Activated T-helper 2 cell treated with anti-CD3 and anti-CD28 coated beads, Interferon-gamma antibody, Interleukin-2, Interleukin-4, amounts not matched to agents 10 μg/mL and 5 μg/mL and 100 μg/mL, durations not matched to agents 14 hours and 24 hours and 36 hours (primary cell): ENCODE measurements at regions of chr1 and their contacts with region 1.

Region 1: GRCh38 chr1:43293896-43294760 is 6.7 kb upstream of the TIE1 start:
- DNase-seq: no peak
- H3K4me3 Mint-ChIP-seq: no peak overlapping the region
- H3K27ac Mint-ChIP-seq: peak overlapping the region; percentile 53
- H3K4me1 Mint-ChIP-seq: peaks cover 22% of the 10 kb centered on the region
- H3K27me3 Mint-ChIP-seq: no peaks in the 10 kb centered on the region

Region 2: GRCh38 chr1:43329995-43330751 is 36.0 kb after region 1 on chr1:
- intact Hi-C with region 1: loop called (anchors 2 kb)
- DNase-seq: no peak
- H3K4me3 Mint-ChIP-seq: no peak overlapping the region
- H3K27ac Mint-ChIP-seq: peak overlapping the region; percentile 65
- H3K4me1 Mint-ChIP-seq: peaks cover 22% of the 10 kb centered on the region
- H3K27me3 Mint-ChIP-seq: no peaks in the 10 kb centered on the region

Region 3: GRCh38 chr1:43348809-43349583 is 54.9 kb after region 1 on chr1:
- intact Hi-C with region 1: loop called (anchors 5 kb)
- DNase-seq: peak; percentile 48
- H3K4me3 Mint-ChIP-seq: peak overlapping the region; percentile 65
- H3K27ac Mint-ChIP-seq: peak overlapping the region; percentile 78
- H3K4me1 Mint-ChIP-seq: peaks cover 31% of the 10 kb centered on the region
- H3K27me3 Mint-ChIP-seq: no peaks in the 10 kb centered on the region